Caco-2 (cell line): ENCODE measurements at regions of chr20 and their contacts with region 1.

Region 1: DNA sequence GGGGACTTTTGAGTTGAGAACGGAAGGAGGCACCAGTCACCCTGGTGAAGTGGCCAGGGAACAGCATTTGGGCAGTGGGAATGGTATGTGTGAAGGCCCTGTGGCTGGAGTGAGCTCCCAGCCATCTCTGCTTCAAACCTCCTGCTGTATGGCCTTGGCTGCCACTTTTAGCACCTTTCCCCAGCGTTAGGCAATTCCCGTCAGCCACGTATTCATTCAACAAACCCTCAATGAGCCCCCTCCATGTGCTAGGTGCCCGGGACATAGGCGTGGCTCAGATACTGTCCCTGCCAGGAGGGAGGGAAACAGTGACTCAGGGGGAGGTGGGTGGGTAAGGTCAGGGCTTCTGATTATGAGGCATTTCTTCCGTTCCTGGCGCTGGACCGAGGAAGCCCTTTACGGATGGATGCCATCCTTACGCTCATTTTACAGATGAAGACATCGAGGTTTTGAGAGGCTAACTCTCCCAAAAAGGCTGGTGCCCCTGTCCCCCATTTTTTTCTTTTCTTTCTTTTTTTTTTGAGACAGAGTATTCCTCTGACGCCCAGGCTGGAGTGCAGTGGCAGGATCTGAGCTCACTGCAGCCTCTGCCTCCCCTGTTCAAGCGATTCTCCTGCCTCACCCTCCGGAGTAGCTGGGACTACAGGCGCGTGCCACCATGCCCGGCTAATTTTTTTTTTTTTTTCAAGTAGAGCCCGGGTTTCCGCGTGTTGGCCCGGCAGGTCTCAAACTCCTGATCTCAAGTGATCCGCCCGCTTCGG is 37.5 kb downstream of the SRC start:
- DNase-seq: peak in 1 of 2 experiments; percentile 48
- H3K4me3 ChIP-seq: no peak overlapping the region
- H3K4me3 Mint-ChIP-seq: no peak overlapping the region
- H3K27ac Mint-ChIP-seq: peak overlapping the region; percentile 20
- H3K4me1 ChIP-seq: peaks cover 34% of the 10 kb centered on the region
- H3K4me1 Mint-ChIP-seq: peaks cover 26% of the 10 kb centered on the region
- H3K27me3 ChIP-seq: no peaks in the 10 kb centered on the region
- H3K27me3 Mint-ChIP-seq: no peaks in the 10 kb centered on the region
- CTCF ChIP-seq: no peak

Region 2: GRCh38 chr20:37202267-37202943 is 181.0 kb before region 1 on chr20:
- CTCF ChIA-PET with region 1: no interaction called
- POLR2A ChIA-PET with region 1: no interaction called
- intact Hi-C with region 1: loop called (anchors 2 kb)
- DNase-seq: peak; percentile 74 to 82
- H3K4me3 ChIP-seq: no peak overlapping the region
- H3K4me3 Mint-ChIP-seq: no peak overlapping the region
- H3K27ac Mint-ChIP-seq: no peak overlapping the region
- H3K4me1 ChIP-seq: peaks cover 9% of the 10 kb centered on the region
- H3K4me1 Mint-ChIP-seq: peaks cover 16% of the 10 kb centered on the region
- H3K27me3 ChIP-seq: no peaks in the 10 kb centered on the region
- H3K27me3 Mint-ChIP-seq: no peaks in the 10 kb centered on the region
- CTCF ChIP-seq: peak; percentile 96 to 99

Region 3: DNA sequence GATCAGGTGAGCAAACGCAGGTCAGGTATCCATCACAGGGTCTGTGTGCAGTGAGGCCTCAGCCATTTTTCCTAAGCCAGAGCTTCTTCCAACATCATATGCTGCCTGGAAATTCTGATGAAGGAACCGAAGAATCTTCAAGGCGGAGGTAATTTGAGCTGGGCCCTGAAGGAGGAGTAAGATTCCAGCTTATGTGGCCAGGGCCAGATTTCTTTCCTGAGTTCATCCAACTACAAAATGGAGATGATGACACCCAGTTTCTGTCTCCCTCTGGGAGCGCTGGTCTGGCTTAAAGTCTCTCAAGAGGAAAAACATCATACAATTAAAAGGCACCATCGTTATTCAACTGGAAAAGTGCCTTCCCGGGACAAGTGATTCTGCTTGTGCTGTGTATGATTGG is 100.9 kb before region 1 on chr20:
- CTCF ChIA-PET with region 1: interaction called, 6 read pairs
- POLR2A ChIA-PET with region 1: no interaction called
- intact Hi-C with region 1: loop called (anchors 2 kb)
- DNase-seq: peak in 1 of 2 experiments; percentile 55
- H3K4me3 ChIP-seq: no peak overlapping the region
- H3K4me3 Mint-ChIP-seq: no peak overlapping the region
- H3K27ac Mint-ChIP-seq: no peak overlapping the region
- H3K4me1 ChIP-seq: peaks cover 25% of the 10 kb centered on the region
- H3K4me1 Mint-ChIP-seq: peaks cover 7% of the 10 kb centered on the region
- H3K27me3 ChIP-seq: no peaks in the 10 kb centered on the region
- H3K27me3 Mint-ChIP-seq: no peaks in the 10 kb centered on the region
- CTCF ChIP-seq: peak; percentile 61 to 69

Region 4: GRCh38 chr20:37294262-37294981 is 89.0 kb before region 1 on chr20:
- CTCF ChIA-PET with region 1: no interaction called
- POLR2A ChIA-PET with region 1: interaction called, 8 read pairs
- intact Hi-C with region 1: loop called (anchors 1 kb)
- DNase-seq: no peak
- H3K4me3 ChIP-seq: no peak overlapping the region
- H3K4me3 Mint-ChIP-seq: no peak overlapping the region
- H3K27ac Mint-ChIP-seq: no peak overlapping the region
- H3K4me1 ChIP-seq: no peaks in the 10 kb centered on the region; the same call in 1 of the 2 replicates
- H3K4me1 Mint-ChIP-seq: peaks cover 16% of the 10 kb centered on the region
- H3K27me3 ChIP-seq: no peaks in the 10 kb centered on the region
- H3K27me3 Mint-ChIP-seq: no peaks in the 10 kb centered on the region
- CTCF ChIP-seq: no peak

Region 5: DNA sequence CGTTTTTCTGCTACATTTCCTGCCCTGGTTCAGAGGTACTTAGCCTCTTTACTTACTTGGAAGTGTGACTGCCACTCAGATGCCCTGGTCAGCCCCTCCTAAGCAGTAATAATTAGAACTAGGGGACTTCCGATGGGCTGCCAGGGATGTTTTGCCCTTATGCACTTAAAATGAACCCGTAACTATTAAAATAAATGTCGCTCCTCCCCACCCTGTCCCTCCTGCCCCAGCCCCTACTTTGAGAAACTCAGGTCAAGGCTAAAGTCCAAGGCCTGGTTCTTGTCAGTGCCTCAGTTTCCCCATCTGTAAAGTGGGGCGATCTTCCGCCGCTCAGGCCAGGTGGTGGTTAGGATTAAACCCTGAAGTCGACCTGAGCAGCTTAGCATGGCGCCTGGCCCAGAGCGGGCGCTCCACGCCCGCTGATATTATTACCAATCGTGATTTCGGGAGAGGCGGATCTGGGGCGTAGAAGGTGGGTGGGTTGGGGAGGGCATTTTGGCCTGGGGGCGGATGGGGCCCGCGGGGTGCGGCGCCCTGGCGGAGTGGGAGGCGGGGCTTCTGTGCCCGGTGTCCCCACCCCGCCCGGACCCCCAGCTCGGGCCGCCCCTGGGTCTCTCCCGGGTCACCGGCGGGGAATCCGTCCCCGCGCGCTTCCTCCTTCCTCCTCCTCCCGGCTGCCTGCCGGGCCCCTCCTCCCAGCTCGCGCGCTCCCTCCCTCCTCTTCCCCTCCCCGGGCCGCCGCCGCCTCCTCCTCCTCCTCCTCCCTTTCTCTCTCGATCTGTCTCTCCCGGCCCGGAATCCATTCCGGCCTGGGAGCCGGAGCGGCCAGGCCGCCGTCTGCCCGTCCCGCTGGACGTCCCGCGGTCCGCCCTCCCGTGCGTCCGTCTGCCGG is 37.8 kb before region 1 on chr20 and contains the start of gene SRC:
- CTCF ChIA-PET with region 1: interaction called, 8 read pairs
- POLR2A ChIA-PET with region 1: interaction called, 6 read pairs
- intact Hi-C with region 1: loop called (anchors 1 kb)
- DNase-seq: peak in 1 of 2 experiments; percentile 73
- H3K4me3 ChIP-seq: peak within 1 kb of the TSS; percentile 46
- H3K4me3 Mint-ChIP-seq: peak within 1 kb of the TSS; percentile 90
- H3K27ac Mint-ChIP-seq: peak within 1 kb of the TSS; percentile 98
- H3K4me1 ChIP-seq: peaks cover 50% of the 10 kb centered on the region
- H3K4me1 Mint-ChIP-seq: peaks cover 41% of the 10 kb centered on the region
- H3K27me3 ChIP-seq: no peaks in the 10 kb centered on the region
- H3K27me3 Mint-ChIP-seq: no peaks in the 10 kb centered on the region
- CTCF ChIP-seq: no peak
- total RNA-seq, gene SRC: 197 and 222 TPM in 2 replicates